ENCODE measurements at regions of chr3 and their contacts with region 1.

Region 1: GRCh38 chr3:53709860-53710674 is 136.2 kb downstream of the CHDH start:
- DNase-seq: peak; percentile 44
- ATAC-seq: peak; percentile 80
- H3K4me3 Mint-ChIP-seq: no peak overlapping the region
- H3K27ac Mint-ChIP-seq: no peak overlapping the region
- H3K4me1 Mint-ChIP-seq: peaks cover 15% of the 10 kb centered on the region
- H3K27me3 Mint-ChIP-seq: no peaks in the 10 kb centered on the region
- CTCF ChIP-seq: peak; percentile 23

Region 2: DNA sequence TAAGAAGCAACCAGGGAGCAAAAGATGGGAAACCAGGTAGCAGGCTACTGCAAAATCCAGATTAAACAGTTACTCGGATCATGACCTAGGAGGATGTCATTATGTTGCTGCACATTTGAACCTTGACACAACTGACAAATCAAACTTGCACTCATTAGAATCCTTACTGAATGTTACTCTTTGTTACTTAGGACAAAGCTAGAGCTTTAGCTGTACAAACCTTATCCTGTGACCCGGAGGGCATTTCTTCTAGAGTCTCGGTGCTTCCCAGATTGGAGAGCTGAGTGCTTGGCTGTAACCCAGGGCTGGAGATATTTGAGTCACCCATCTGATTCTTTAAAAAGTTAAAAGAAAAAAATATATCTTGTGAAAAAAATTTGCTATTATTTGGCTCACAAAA is 406.1 kb before region 1 on chr3:
- CTCF ChIA-PET with region 1: interaction called, 6 read pairs
- POLR2A ChIA-PET with region 1: no interaction called
- intact Hi-C with region 1: loop called (anchors 1 kb)
- DNase-seq: no peak
- ATAC-seq: no peak
- H3K4me3 Mint-ChIP-seq: no peak overlapping the region
- H3K27ac Mint-ChIP-seq: no peak overlapping the region
- H3K4me1 Mint-ChIP-seq: peaks cover 2% of the 10 kb centered on the region
- H3K27me3 Mint-ChIP-seq: no peaks in the 10 kb centered on the region
- CTCF ChIP-seq: no peak

Region 3: GRCh38 chr3:53531749-53532148 is 178.3 kb before region 1 on chr3:
- CTCF ChIA-PET with region 1: no interaction called
- POLR2A ChIA-PET with region 1: no interaction called
- intact Hi-C with region 1: loop called (anchors 2 kb)
- DNase-seq: no peak
- ATAC-seq: no peak
- H3K4me3 Mint-ChIP-seq: no peak overlapping the region
- H3K27ac Mint-ChIP-seq: no peak overlapping the region
- H3K4me1 Mint-ChIP-seq: no peaks in the 10 kb centered on the region
- H3K27me3 Mint-ChIP-seq: peaks cover 12% of the 10 kb centered on the region
- CTCF ChIP-seq: no peak

Region 4: DNA sequence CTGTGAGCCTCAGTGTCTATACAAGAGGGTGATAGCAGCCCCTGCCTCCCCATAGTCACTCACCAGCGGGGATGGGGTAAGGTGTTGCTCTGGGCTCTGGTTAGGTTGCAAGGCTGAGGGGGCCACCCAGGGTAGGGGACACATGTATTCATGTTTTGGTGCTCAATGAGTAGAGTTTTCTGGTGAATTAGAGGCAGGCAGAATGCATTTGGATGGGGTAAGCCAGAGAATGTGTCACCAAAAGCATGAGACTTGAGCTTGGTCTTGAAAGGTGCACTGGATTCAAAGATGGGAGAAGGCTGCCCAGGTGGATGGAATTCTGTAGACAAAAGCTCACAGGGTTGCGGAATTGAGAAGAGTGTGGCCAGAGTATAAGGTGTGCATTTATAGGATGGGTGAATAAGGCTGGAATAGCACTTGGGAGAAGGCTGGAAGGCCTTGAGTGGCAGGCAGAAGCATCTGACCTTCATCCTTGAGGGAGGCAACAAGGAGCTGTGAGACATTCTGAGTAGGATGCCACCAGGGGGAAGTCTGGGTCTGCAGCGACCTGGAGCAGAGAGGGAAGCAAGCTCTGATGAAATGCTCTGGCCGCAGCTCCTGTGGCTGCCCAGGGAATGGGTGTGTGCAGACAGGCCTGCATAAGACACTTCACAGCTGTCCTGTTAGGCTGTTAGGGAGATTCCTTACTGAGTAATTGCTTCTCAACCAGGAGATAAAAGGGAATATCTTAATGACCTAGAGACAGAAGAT is 13.5 kb before region 1 on chr3:
- CTCF ChIA-PET with region 1: interaction called, 10 read pairs
- POLR2A ChIA-PET with region 1: no interaction called
- intact Hi-C with region 1: no loop called
- DNase-seq: no peak
- ATAC-seq: no peak
- H3K4me3 Mint-ChIP-seq: no peak overlapping the region
- H3K27ac Mint-ChIP-seq: no peak overlapping the region
- H3K4me1 Mint-ChIP-seq: peaks cover 5% of the 10 kb centered on the region
- H3K27me3 Mint-ChIP-seq: peaks cover 2% of the 10 kb centered on the region
- CTCF ChIP-seq: no peak

Measured in activated B cell treated with CpG ODN at 0.5 μM for 24 hours (primary cell).